Naive thymus-derived CD4-positive, alpha-beta T cell (primary cell): ENCODE measurements at regions of chrX and their contacts with region 1.

Region 1: GRCh38 chrX:79412972-79413371 is 45.8 kb upstream of the ITM2A start:
- DNase-seq: peak in 7 of 9 donors; percentile 13 to 65 (median 39)
- ATAC-seq: no peak
- H3K4me3 ChIP-seq: peak overlapping the region; percentile 58
- H3K4me3 Mint-ChIP-seq: peak overlapping the region; percentile 58 to 85 (median 82)
- H3K27ac ChIP-seq: peak overlapping the region; percentile 68
- H3K27ac Mint-ChIP-seq: peak overlapping the region; percentile 46 to 92 (median 68)
- H3K4me1 ChIP-seq: peaks cover 0 to 3% of the 10 kb centered on the region in 2 donors
- H3K4me1 Mint-ChIP-seq: peaks cover 13 to 46% (median 27%) of the 10 kb centered on the region in 7 donors
- H3K27me3 ChIP-seq: no peaks in the 10 kb centered on the region
- H3K27me3 Mint-ChIP-seq: no peaks in the 10 kb centered on the region

Region 2: DNA sequence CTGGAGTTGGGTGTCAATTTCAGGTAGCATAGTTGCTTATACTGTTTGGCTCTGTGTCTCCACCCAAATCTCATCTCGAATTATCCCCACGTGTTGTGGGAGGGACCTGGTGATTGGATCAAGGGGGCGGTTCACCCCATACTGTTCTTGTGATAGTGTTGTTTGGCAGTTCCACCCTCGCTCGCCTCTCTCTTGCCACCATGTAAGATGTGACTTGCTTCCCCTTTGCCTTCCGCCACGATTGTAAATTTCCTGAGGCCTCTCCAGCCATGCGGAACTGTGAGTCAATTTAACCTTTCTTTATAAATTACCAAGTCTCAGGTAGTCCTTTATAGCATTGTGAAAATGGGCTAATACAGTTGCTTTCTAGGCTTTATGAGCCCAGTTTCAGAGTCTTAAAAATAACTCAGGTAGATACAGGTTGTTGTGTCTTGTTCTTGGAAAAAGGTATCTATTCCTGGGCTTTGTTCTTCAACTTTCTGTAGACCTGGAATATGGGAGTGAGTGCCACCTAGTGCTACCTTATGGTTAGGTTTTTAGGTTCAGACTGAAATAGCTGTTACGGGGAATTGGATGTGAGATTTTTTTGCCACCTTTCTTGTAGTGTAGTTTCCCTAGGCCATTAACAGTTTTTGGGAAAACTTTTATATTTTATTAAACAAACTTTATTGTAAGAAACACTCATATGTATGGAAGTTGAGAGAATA is 1293.3 kb before region 1 on chrX:
- CTCF ChIA-PET with region 1: no interaction called
- POLR2A ChIA-PET with region 1: no interaction called
- intact Hi-C with region 1: loop called in 1 of 2 experiments (anchors 10 kb)
- DNase-seq: no peak
- ATAC-seq: peak; percentile 45
- H3K4me3 ChIP-seq: no peak overlapping the region
- H3K4me3 Mint-ChIP-seq: peak overlapping the region in 1 of 10 donors; percentile 12
- H3K27ac ChIP-seq: peak overlapping the region; percentile 27
- H3K27ac Mint-ChIP-seq: peak overlapping the region in 6 of 9 donors; percentile 11 to 84 (median 28)
- H3K4me1 ChIP-seq: peaks cover 0 to 25% of the 10 kb centered on the region in 2 donors
- H3K4me1 Mint-ChIP-seq: peaks cover 26 to 70% (median 56%) of the 10 kb centered on the region in 7 donors
- H3K27me3 ChIP-seq: no peaks in the 10 kb centered on the region
- H3K27me3 Mint-ChIP-seq: no peaks in the 10 kb centered on the region

Region 3: GRCh38 chrX:78555401-78555980 is 857.5 kb before region 1 on chrX:
- CTCF ChIA-PET with region 1: interaction called, 6 read pairs
- POLR2A ChIA-PET with region 1: interaction called, 3 read pairs
- intact Hi-C with region 1: loop called (anchors 1 kb)
- DNase-seq: peak in 5 of 9 donors; percentile 25 to 44 (median 29)
- ATAC-seq: peak; percentile 59
- H3K4me3 ChIP-seq: no peak overlapping the region
- H3K4me3 Mint-ChIP-seq: peak overlapping the region in 1 of 10 donors; percentile 30
- H3K27ac ChIP-seq: no peak overlapping the region
- H3K27ac Mint-ChIP-seq: peak overlapping the region in 6 of 9 donors; percentile 66 to 83 (median 73)
- H3K4me1 ChIP-seq: peaks cover 0 to 2% of the 10 kb centered on the region in 2 donors
- H3K4me1 Mint-ChIP-seq: peaks cover 0 to 7% (median 3%) of the 10 kb centered on the region in 7 donors
- H3K27me3 ChIP-seq: no peaks in the 10 kb centered on the region
- H3K27me3 Mint-ChIP-seq: no peaks in the 10 kb centered on the region

Region 4: GRCh38 chrX:79036157-79036880 is 376.7 kb before region 1 on chrX:
- CTCF ChIA-PET with region 1: no interaction called
- POLR2A ChIA-PET with region 1: interaction called, 3 read pairs
- intact Hi-C with region 1: loop called in 1 of 2 experiments (anchors 1 kb)
- DNase-seq: peak in 2 of 9 donors; percentile 0 to 5
- ATAC-seq: no peak
- H3K4me3 ChIP-seq: no peak overlapping the region
- H3K4me3 Mint-ChIP-seq: peak overlapping the region in 4 of 10 donors; percentile 8 to 46 (median 23)
- H3K27ac ChIP-seq: no peak overlapping the region
- H3K27ac Mint-ChIP-seq: peak overlapping the region in 3 of 9 donors; percentile 23 to 63 (median 32)
- H3K4me1 ChIP-seq: no peaks in the 10 kb centered on the region
- H3K4me1 Mint-ChIP-seq: peaks cover 0 to 38% (median 26%) of the 10 kb centered on the region in 7 donors
- H3K27me3 ChIP-seq: no peaks in the 10 kb centered on the region
- H3K27me3 Mint-ChIP-seq: no peaks in the 10 kb centered on the region

Region 5: DNA sequence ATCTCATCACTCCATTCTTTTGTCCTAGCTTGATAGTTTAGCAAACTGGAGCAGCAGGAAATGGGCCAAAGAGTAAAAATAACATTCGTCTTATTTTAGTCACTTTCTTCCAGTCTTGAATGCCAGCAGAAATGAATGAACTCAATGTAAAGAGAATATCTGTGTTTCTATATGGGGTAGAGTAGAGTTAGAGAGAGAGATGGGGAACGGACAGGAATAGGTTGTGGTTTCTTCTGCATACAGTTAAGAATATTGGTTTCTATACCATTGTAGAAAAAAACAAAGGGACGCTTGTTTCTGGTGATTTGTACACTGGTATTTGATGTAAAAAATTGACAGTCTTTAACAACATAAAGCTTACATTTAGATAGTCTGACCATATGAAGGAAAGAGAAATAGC is 259.6 kb before region 1 on chrX:
- CTCF ChIA-PET with region 1: interaction called, 5 read pairs
- POLR2A ChIA-PET with region 1: no interaction called
- intact Hi-C with region 1: loop called (anchors 2 to 5 kb)
- DNase-seq: no peak
- ATAC-seq: no peak
- H3K4me3 ChIP-seq: peak overlapping the region; percentile 57
- H3K4me3 Mint-ChIP-seq: peak overlapping the region; percentile 51 to 94 (median 84)
- H3K27ac ChIP-seq: peak overlapping the region; percentile 85
- H3K27ac Mint-ChIP-seq: peak overlapping the region; percentile 69 to 98 (median 95)
- H3K4me1 ChIP-seq: peaks cover 11 to 32% of the 10 kb centered on the region in 2 donors
- H3K4me1 Mint-ChIP-seq: peaks cover 25 to 76% (median 51%) of the 10 kb centered on the region in 7 donors
- H3K27me3 ChIP-seq: no peaks in the 10 kb centered on the region
- H3K27me3 Mint-ChIP-seq: no peaks in the 10 kb centered on the region

Region 6: GRCh38 chrX:79195027-79195426 is 217.9 kb before region 1 on chrX:
- CTCF ChIA-PET with region 1: no interaction called
- POLR2A ChIA-PET with region 1: no interaction called
- intact Hi-C with region 1: no loop called
- DNase-seq: no peak
- ATAC-seq: no peak
- H3K4me3 ChIP-seq: no peak overlapping the region
- H3K4me3 Mint-ChIP-seq: no peak overlapping the region
- H3K27ac ChIP-seq: no peak overlapping the region
- H3K27ac Mint-ChIP-seq: peak overlapping the region in 1 of 9 donors; percentile 74
- H3K4me1 ChIP-seq: no peaks in the 10 kb centered on the region
- H3K4me1 Mint-ChIP-seq: peaks cover 0 to 21% (median 5%) of the 10 kb centered on the region in 7 donors
- H3K27me3 ChIP-seq: no peaks in the 10 kb centered on the region
- H3K27me3 Mint-ChIP-seq: no peaks in the 10 kb centered on the region

Region 7: DNA sequence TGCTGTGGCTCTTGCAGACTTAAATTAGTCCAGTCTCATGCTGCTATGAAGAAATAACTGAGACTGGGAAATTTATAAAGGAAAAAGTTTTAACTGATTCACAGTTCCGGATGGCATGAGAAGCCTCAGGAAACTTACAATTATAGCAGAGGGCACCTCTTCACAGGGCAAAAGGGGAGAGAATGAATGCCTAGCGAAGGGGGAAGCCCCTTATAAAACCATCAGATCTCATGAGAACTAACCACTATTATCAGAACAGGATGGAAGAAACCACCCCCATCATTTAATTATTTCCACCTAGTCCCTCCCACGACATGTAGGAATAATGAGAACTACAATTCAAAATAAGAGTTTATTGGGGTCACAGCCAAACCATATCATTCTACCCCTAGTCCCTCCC is 177.1 kb before region 1 on chrX:
- CTCF ChIA-PET with region 1: no interaction called
- POLR2A ChIA-PET with region 1: no interaction called
- intact Hi-C with region 1: no loop called
- DNase-seq: no peak
- ATAC-seq: no peak
- H3K4me3 ChIP-seq: no peak overlapping the region
- H3K4me3 Mint-ChIP-seq: peak overlapping the region in 1 of 10 donors; percentile 16
- H3K27ac ChIP-seq: no peak overlapping the region
- H3K27ac Mint-ChIP-seq: peak overlapping the region in 7 of 9 donors; percentile 9 to 64 (median 49)
- H3K4me1 ChIP-seq: peaks cover 13% of the 10 kb centered on the region in 2 donors
- H3K4me1 Mint-ChIP-seq: peaks cover 8 to 58% (median 27%) of the 10 kb centered on the region in 7 donors
- H3K27me3 ChIP-seq: no peaks in the 10 kb centered on the region
- H3K27me3 Mint-ChIP-seq: no peaks in the 10 kb centered on the region

Region 8: DNA sequence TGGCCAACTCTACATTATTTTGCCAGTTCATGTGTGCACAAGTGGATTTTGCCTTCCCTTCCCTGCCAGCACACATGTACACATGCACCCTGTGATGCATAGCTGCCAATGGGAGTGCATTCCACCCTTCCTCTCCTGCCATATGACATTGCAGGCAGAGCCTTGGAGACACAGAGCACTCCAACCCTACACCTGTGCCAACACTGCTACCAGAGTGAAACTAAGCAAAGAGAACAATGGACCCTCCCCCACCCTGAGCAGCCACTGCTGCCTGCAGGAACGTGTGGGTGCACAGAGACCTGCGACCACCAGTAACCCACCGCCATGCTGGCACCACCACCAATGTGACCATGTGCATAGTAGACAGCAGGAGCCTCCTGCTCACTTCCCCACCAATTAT is 124.2 kb before region 1 on chrX:
- CTCF ChIA-PET with region 1: no interaction called
- POLR2A ChIA-PET with region 1: no interaction called
- intact Hi-C with region 1: loop called in 1 of 2 experiments (anchors 5 kb)
- DNase-seq: no peak
- ATAC-seq: no peak
- H3K4me3 ChIP-seq: no peak overlapping the region
- H3K4me3 Mint-ChIP-seq: peak overlapping the region in 8 of 10 donors; percentile 7 to 83 (median 49)
- H3K27ac ChIP-seq: no peak overlapping the region
- H3K27ac Mint-ChIP-seq: peak overlapping the region in 6 of 9 donors; percentile 35 to 93 (median 62)
- H3K4me1 ChIP-seq: no peaks in the 10 kb centered on the region
- H3K4me1 Mint-ChIP-seq: peaks cover 15 to 57% (median 48%) of the 10 kb centered on the region in 7 donors
- H3K27me3 ChIP-seq: no peaks in the 10 kb centered on the region
- H3K27me3 Mint-ChIP-seq: no peaks in the 10 kb centered on the region

Region 9: GRCh38 chrX:79366873-79367749 is 45.9 kb before region 1 on chrX and contains the start of gene ITM2A:
- CTCF ChIA-PET with region 1: interaction called, 8 read pairs
- POLR2A ChIA-PET with region 1: interaction called, 15 read pairs
- intact Hi-C with region 1: loop called (anchors 1 kb)
- DNase-seq: peak; percentile 31 to 75 (median 62)
- ATAC-seq: peak; percentile 86
- H3K4me3 ChIP-seq: peak within 1 kb of the TSS; percentile 93
- H3K4me3 Mint-ChIP-seq: peak within 1 kb of the TSS; percentile 89 to 99 (median 95)
- H3K27ac ChIP-seq: peak within 1 kb of the TSS; percentile 89
- H3K27ac Mint-ChIP-seq: peak within 1 kb of the TSS; percentile 92 to 99 (median 98)
- H3K4me1 ChIP-seq: peaks cover 7 to 13% of the 10 kb centered on the region in 2 donors
- H3K4me1 Mint-ChIP-seq: peaks cover 7 to 39% (median 31%) of the 10 kb centered on the region in 7 donors
- H3K27me3 ChIP-seq: no peaks in the 10 kb centered on the region
- H3K27me3 Mint-ChIP-seq: no peaks in the 10 kb centered on the region
- total RNA-seq, gene ITM2A: 109 to 170 (median 154) TPM

Region 10: GRCh38 chrX:79440336-79440735 is 27.4 kb after region 1 on chrX:
- CTCF ChIA-PET with region 1: no interaction called
- POLR2A ChIA-PET with region 1: no interaction called
- intact Hi-C with region 1: no loop called
- DNase-seq: no peak
- ATAC-seq: no peak
- H3K4me3 ChIP-seq: no peak overlapping the region
- H3K4me3 Mint-ChIP-seq: no peak overlapping the region
- H3K27ac ChIP-seq: no peak overlapping the region
- H3K27ac Mint-ChIP-seq: no peak overlapping the region
- H3K4me1 ChIP-seq: no peaks in the 10 kb centered on the region
- H3K4me1 Mint-ChIP-seq: no peaks in the 10 kb centered on the region
- H3K27me3 ChIP-seq: no peaks in the 10 kb centered on the region
- H3K27me3 Mint-ChIP-seq: no peaks in the 10 kb centered on the region

Region 11: DNA sequence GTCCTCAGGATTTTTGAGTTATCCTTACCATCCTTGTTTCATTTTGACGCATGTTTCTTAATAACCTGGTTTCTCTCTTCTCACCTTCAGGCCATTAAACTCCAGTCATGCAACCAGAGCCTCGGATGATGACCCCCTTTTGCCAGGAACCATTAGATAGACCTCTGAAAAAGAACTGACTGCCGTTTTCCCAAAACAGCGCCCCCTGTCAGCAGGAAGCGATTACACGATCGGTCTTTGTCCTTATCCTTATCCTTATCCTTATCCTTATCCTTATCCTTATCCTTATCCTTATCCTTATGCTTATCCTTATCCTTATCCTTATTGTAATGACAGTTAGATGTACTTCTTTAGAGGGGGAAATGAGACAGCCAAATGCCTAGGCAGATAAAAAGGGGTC is 102.6 kb after region 1 on chrX:
- CTCF ChIA-PET with region 1: no interaction called
- POLR2A ChIA-PET with region 1: no interaction called
- intact Hi-C with region 1: no loop called
- DNase-seq: no peak
- ATAC-seq: no peak
- H3K4me3 ChIP-seq: no peak overlapping the region
- H3K4me3 Mint-ChIP-seq: no peak overlapping the region
- H3K27ac ChIP-seq: no peak overlapping the region
- H3K27ac Mint-ChIP-seq: no peak overlapping the region
- H3K4me1 ChIP-seq: no peaks in the 10 kb centered on the region
- H3K4me1 Mint-ChIP-seq: no peaks in the 10 kb centered on the region
- H3K27me3 ChIP-seq: no peaks in the 10 kb centered on the region
- H3K27me3 Mint-ChIP-seq: peaks cover 0 to 15% (median 0%) of the 10 kb centered on the region in 5 donors